ENCODE measurements at regions of chr19 and their contacts with region 1.

Region 1: GRCh38 chr19:16111160-16111908 is at the start of gene RAB8A:
- DNase-seq: peak; percentile 99
- H3K4me3 Mint-ChIP-seq: peak within 1 kb of the TSS; percentile 98
- H3K27ac Mint-ChIP-seq: peak within 1 kb of the TSS; percentile 96
- H3K4me1 Mint-ChIP-seq: peaks cover 36% of the 10 kb centered on the region
- H3K27me3 Mint-ChIP-seq: no peaks in the 10 kb centered on the region
- total RNA-seq, gene RAB8A: 90.5 to 95.2 TPM

Region 2: GRCh38 chr19:16018801-16019551 is 92.4 kb before region 1 on chr19:
- CTCF ChIA-PET with region 1: no interaction called
- intact Hi-C with region 1: no loop called
- DNase-seq: no peak
- H3K4me3 Mint-ChIP-seq: no peak overlapping the region
- H3K27ac Mint-ChIP-seq: no peak overlapping the region
- H3K4me1 Mint-ChIP-seq: no peaks in the 10 kb centered on the region
- H3K27me3 Mint-ChIP-seq: no peaks in the 10 kb centered on the region

Region 3: DNA sequence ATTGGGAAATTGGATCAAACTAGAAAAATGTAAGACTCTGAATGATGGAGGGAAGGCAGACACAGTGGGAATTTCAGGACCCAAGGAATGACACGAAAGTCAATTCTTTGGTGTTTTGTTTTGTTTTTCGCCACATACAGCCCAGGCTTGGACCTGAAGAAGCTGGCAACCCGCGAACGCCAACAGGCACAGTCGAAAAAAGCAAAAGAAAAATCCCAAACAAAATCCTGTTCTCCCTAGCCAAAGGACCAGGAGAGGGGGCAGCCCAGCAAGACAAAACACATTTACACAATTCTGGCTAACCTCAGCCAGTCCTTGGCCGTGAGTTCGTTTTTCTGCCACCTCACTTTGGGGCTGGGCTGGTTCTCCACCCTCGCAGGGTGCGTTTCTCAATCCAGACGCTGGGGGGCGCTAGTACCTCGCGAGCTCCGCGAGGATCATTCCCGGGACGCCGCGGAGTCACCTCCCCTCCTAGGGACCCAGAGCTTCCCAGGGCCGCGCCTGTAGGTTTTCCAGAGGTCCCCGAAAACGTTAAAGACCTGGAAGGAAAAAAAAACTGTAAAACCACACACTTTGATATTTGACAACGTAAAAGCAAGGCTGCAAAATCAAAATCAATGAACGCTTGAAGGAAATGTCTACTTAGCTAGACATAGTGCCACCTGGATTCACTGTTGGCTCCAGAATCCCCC is 69.9 kb before region 1 on chr19:
- CTCF ChIA-PET with region 1: interaction called, 7 read pairs
- intact Hi-C with region 1: loop called (anchors 1 kb)
- DNase-seq: peak; percentile 83
- H3K4me3 Mint-ChIP-seq: peak overlapping the region; percentile 21
- H3K27ac Mint-ChIP-seq: no peak overlapping the region
- H3K4me1 Mint-ChIP-seq: peaks cover 11% of the 10 kb centered on the region
- H3K27me3 Mint-ChIP-seq: no peaks in the 10 kb centered on the region

Region 4: DNA sequence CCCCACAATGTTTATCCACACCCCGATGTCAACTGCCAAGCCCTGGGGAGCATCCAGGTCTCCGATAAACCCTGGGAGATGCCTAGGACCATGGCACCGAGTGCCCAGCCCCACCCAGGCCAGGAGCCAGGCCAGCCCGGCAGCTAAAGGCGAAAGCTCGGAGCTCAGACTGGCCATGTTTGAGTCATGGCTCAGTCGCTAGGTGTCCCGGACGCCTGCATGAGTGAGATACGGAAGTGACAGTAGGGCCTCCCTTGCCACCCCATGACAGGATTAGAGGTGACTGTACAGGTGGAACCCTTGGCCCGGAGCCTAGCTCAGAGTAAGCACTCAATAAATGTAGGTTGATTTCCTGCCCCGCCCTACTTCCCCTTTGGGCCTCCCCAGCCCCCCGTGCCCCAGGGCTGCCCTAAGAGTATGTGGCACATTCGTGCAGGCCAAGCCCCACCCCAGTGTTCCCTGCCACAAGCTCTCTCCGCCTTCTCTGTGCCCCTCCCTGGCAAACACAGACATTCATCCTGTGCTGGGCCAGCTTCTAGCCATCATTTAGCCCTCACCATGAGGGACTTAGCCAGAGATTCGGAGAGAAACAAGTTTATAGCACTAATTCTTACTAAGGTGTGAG is 40.9 kb before region 1 on chr19:
- CTCF ChIA-PET with region 1: interaction called, 8 read pairs
- intact Hi-C with region 1: loop called (anchors 1 kb)
- DNase-seq: peak; percentile 96
- H3K4me3 Mint-ChIP-seq: no peak overlapping the region
- H3K27ac Mint-ChIP-seq: no peak overlapping the region
- H3K4me1 Mint-ChIP-seq: peaks cover 38% of the 10 kb centered on the region
- H3K27me3 Mint-ChIP-seq: no peaks in the 10 kb centered on the region

Region 5: GRCh38 chr19:16143399-16144245 is 32.3 kb after region 1 on chr19 and contains the start of gene HSH2D:
- CTCF ChIA-PET with region 1: interaction called, 3 read pairs
- intact Hi-C with region 1: loop called (anchors 1 kb)
- DNase-seq: peak; percentile 90
- H3K4me3 Mint-ChIP-seq: peak within 1 kb of the TSS; percentile 98
- H3K27ac Mint-ChIP-seq: peak within 1 kb of the TSS; percentile 96
- H3K4me1 Mint-ChIP-seq: peaks cover 25% of the 10 kb centered on the region
- H3K27me3 Mint-ChIP-seq: no peaks in the 10 kb centered on the region
- total RNA-seq, gene HSH2D: 18.3 to 20.7 TPM

Region 6: GRCh38 chr19:16197622-16198369 is 86.5 kb after region 1 on chr19 and contains the start of gene AP1M1:
- CTCF ChIA-PET with region 1: interaction called, 4 read pairs
- intact Hi-C with region 1: loop called (anchors 1 kb)
- DNase-seq: peak; percentile 99
- H3K4me3 Mint-ChIP-seq: peak within 1 kb of the TSS; percentile 93
- H3K27ac Mint-ChIP-seq: peak within 1 kb of the TSS; percentile 93
- H3K4me1 Mint-ChIP-seq: peaks cover 37% of the 10 kb centered on the region
- H3K27me3 Mint-ChIP-seq: no peaks in the 10 kb centered on the region
- total RNA-seq, gene AP1M1: 113 to 123 TPM

Region 7: GRCh38 chr19:16584248-16585141 is 473.2 kb after region 1 on chr19:
- CTCF ChIA-PET with region 1: no interaction called
- intact Hi-C with region 1: loop called (anchors 1 kb)
- DNase-seq: peak; percentile 96
- H3K4me3 Mint-ChIP-seq: peak overlapping the region; percentile 79
- H3K27ac Mint-ChIP-seq: peak overlapping the region; percentile 82
- H3K4me1 Mint-ChIP-seq: peaks cover 79% of the 10 kb centered on the region
- H3K27me3 Mint-ChIP-seq: no peaks in the 10 kb centered on the region